PC-9 (cell line): ENCODE measurements at regions of chr9 and their contacts with region 1.

Region 1: GRCh38 chr9:90331826-90332575 is 310.6 kb downstream of the DIRAS2 start:
- DNase-seq: peak; percentile 55 to 88
- H3K4me3 ChIP-seq: peak overlapping the region; percentile 31; the same call in 1 of the 2 replicates
- H3K27ac ChIP-seq: peak overlapping the region; percentile 98
- H3K4me1 ChIP-seq: peaks cover 37% of the 10 kb centered on the region
- H3K27me3 ChIP-seq: no peaks in the 10 kb centered on the region
- CTCF ChIP-seq: no peak

Region 2: GRCh38 chr9:90301277-90301653 is 30.7 kb before region 1 on chr9:
- CTCF ChIA-PET with region 1: no interaction called
- POLR2A ChIA-PET with region 1: no interaction called
- intact Hi-C with region 1: loop called (anchors 1 kb)
- DNase-seq: peak; percentile 86 to 94
- H3K4me3 ChIP-seq: no peak overlapping the region
- H3K27ac ChIP-seq: peak overlapping the region; percentile 60
- H3K4me1 ChIP-seq: peaks cover 9% of the 10 kb centered on the region
- H3K27me3 ChIP-seq: no peaks in the 10 kb centered on the region
- CTCF ChIP-seq: no peak